CD14-positive monocyte (primary cell): ENCODE measurements at regions of chr7 and their contacts with region 1.

Region 1: DNA sequence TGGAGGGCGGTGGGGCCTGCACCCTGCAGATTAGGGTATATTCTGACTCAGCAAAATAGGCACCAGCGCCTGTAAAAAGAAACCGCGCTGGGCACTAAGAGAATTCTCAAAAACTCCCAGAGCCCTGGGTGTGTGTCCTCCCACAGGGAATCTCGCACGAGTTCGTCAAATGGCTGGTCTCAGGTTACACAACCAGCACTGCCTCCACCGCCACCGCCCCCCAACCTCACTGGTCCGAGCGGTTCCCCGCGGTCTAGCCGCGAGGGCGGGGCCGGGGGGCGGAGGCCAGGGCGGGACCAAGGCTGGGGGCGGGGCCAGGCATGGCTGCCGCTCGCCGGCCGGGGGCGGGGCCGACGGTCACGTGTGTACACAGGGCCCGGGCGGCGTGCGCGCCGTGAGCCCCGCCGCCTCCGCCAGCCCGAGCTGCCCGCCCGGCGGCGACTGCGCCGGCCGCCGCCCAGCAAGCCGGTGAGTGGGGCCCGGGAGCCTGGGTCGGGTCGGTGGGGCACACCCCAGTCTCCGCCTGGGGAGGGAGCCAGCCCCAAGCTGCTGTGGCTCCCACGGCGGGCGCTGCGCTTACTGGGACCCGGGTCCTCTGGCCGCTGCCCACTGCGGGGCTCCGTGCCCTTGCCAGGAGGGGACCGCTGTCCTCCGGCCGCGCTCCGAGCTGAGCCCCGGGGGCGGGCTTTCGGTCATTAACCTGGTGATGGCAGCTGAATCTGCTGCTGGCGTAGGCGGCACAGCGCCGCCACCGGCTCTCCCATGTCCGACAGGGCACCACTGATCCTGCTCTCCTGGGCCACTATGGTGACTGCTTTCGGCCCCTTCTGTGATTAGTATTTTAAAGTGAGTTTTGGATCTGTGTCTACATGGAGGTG is at the start of gene GPR146:
- DNase-seq: peak; percentile 79 to 87 (median 85)
- H3K4me3 ChIP-seq: peak within 1 kb of the TSS; percentile 61 to 93 (median 84)
- H3K4me3 Mint-ChIP-seq: peak within 1 kb of the TSS; percentile 76 to 83
- H3K27ac ChIP-seq: peak within 1 kb of the TSS; percentile 47 to 75
- H3K27ac Mint-ChIP-seq: peak within 1 kb of the TSS; percentile 56 to 90 (median 80)
- H3K4me1 ChIP-seq: peaks cover 24 to 45% of the 10 kb centered on the region in 2 donors
- H3K4me1 Mint-ChIP-seq: peaks cover 30% of the 10 kb centered on the region
- H3K27me3 ChIP-seq: peaks cover 0 to 27% of the 10 kb centered on the region in 2 donors
- H3K27me3 Mint-ChIP-seq: peaks cover 16 to 21% (median 19%) of the 10 kb centered on the region in 3 donors
- CTCF ChIP-seq: peak; percentile 76
- polyA plus RNA-seq, gene GPR146: 0.48 to 0.92 (median 0.48) TPM

Region 2: DNA sequence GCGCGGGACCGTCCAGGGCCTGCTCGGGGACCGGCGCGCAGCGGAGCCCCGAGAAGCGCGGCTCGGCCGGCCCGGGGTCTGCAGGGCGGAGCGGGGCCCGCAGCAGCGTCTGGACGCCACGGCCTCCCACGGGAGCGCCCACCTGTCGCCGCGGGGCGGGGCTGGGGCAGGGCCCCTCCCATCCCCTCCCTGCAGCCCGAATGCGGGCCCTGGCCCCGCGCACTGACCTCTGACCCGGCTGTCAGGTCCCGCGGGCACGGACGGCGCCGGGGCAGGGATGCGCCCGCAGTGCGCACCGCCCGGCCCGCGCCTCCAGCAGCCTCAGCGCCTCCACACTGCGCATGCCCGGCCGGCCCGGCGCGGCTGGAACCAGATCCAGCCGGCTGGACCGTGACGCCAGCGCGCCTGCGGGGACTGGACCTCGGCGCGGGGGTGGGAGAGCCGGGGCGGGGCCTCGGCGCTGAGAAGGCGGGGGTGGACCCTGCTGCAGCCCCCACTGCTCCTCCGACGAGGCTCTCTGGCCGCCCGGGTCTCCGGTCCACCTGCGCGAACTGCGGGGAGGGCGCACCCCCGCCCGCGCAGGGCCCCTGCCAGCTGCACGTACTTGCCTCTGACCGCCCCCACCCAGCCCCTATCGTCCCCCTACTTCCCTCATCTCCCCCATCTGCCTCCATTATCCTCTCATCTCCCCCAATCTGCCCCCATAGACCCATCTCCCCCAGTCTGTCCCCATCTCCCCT is 16.2 kb before region 1 on chr7:
- intact Hi-C with region 1: loop called (anchors 1 to 2 kb)
- DNase-seq: peak; percentile 81 to 83 (median 81)
- H3K4me3 ChIP-seq: peak overlapping the region; percentile 28 to 72 (median 41)
- H3K4me3 Mint-ChIP-seq: peak overlapping the region; percentile 48 to 83
- H3K27ac ChIP-seq: peak overlapping the region; percentile 77 to 89
- H3K27ac Mint-ChIP-seq: peak overlapping the region in 6 of 7 donors; percentile 86 to 94 (median 93)
- H3K4me1 ChIP-seq: peaks cover 49 to 68% of the 10 kb centered on the region in 2 donors
- H3K4me1 Mint-ChIP-seq: peaks cover 44% of the 10 kb centered on the region
- H3K27me3 ChIP-seq: no peaks in the 10 kb centered on the region
- H3K27me3 Mint-ChIP-seq: peaks cover 0 to 8% (median 5%) of the 10 kb centered on the region in 3 donors
- CTCF ChIP-seq: no peak

Region 3: GRCh38 chr7:1159891-1160668 is 115.7 kb after region 1 on chr7 and contains the start of gene ZFAND2A:
- intact Hi-C with region 1: loop called in 1 of 2 experiments (anchors 5 kb)
- DNase-seq: peak; percentile 97 to 99 (median 99)
- H3K4me3 ChIP-seq: peak within 1 kb of the TSS; percentile 75 to 99 (median 95)
- H3K4me3 Mint-ChIP-seq: peak within 1 kb of the TSS; percentile 85 to 93
- H3K27ac ChIP-seq: peak within 1 kb of the TSS; percentile 79 to 91
- H3K27ac Mint-ChIP-seq: peak within 1 kb of the TSS; percentile 90 to 98 (median 95)
- H3K4me1 ChIP-seq: peaks cover 17 to 22% of the 10 kb centered on the region in 2 donors
- H3K4me1 Mint-ChIP-seq: peaks cover 23% of the 10 kb centered on the region
- H3K27me3 ChIP-seq: no peaks in the 10 kb centered on the region
- H3K27me3 Mint-ChIP-seq: peaks cover 0 to 2% (median 0%) of the 10 kb centered on the region in 3 donors
- CTCF ChIP-seq: no peak
- polyA plus RNA-seq, gene ZFAND2A: 30.6 to 126 (median 35.1) TPM